ENCODE measurements at regions of chr1 and their contacts with region 1.

Region 1: GRCh38 chr1:8133657-8134430 is 107.7 kb upstream of the ERRFI1 start:
- DNase-seq: no peak
- ATAC-seq: no peak
- H3K4me3 ChIP-seq: no peak overlapping the region
- H3K4me3 Mint-ChIP-seq: no peak overlapping the region
- H3K27ac ChIP-seq: no peak overlapping the region
- H3K27ac Mint-ChIP-seq: no peak overlapping the region
- H3K4me1 ChIP-seq: no peaks in the 10 kb centered on the region
- H3K4me1 Mint-ChIP-seq: no peaks in the 10 kb centered on the region
- H3K27me3 ChIP-seq: peaks cover 0 to 18% of the 10 kb centered on the region in 2 experiments
- H3K27me3 Mint-ChIP-seq: peaks cover 44% of the 10 kb centered on the region
- CTCF ChIP-seq: no peak

Region 2: GRCh38 chr1:7893529-7894180 is 240.2 kb before region 1 on chr1:
- CTCF ChIA-PET with region 1: no interaction called
- POLR2A ChIA-PET with region 1: no interaction called
- intact Hi-C with region 1: no loop called
- DNase-seq: no peak
- ATAC-seq: no peak
- H3K4me3 ChIP-seq: no peak overlapping the region
- H3K4me3 Mint-ChIP-seq: no peak overlapping the region
- H3K27ac ChIP-seq: no peak overlapping the region
- H3K27ac Mint-ChIP-seq: no peak overlapping the region
- H3K4me1 ChIP-seq: no peaks in the 10 kb centered on the region
- H3K4me1 Mint-ChIP-seq: no peaks in the 10 kb centered on the region
- H3K27me3 ChIP-seq: no peaks in the 10 kb centered on the region
- H3K27me3 Mint-ChIP-seq: peaks cover 8% of the 10 kb centered on the region
- CTCF ChIP-seq: no peak

Region 3: DNA sequence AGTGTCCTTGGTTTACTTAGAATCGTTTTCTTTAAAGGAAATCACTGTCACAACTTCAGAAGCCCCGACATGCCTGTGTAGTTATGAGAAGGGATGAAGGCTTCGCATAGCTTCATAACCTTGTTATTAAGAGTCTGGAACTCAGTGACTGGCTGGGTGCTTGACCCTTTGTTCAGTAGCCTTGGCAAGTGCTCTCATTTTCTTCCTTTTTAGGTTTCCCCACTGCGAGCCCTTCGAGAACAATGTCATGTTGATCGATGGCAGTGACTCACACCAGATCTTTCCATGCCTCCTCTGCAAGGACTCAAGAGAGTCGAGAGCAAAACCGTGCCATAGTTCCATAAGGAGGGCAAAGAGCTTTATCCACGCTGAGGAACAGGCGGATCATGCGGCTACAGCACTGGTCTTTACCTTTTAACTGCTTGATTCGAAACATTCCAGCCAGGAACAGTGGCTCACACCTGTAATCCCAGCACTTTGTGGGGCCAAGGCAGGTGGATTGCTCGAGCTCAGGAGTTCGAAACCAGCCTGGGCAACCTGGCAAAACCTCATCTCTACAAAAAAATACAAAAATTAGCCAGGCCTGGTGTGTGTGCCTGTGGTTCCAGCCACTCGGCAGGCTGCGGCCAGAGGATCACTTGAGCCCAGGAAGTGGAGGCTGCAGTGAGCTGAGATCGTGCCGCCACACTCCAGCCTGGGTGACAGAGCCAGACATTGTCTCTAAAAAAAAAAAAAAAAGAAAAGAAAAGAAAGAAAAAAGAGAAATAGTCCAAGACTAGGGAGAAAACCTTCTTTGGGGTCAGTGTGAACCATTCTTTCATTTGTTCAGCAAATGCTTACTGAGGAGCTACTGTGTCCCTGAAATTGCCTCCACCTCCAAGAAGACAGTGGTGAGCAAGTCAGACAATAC is 12.3 kb before region 1 on chr1:
- CTCF ChIA-PET with region 1: no interaction called
- POLR2A ChIA-PET with region 1: interaction called, 6 read pairs
- intact Hi-C with region 1: loop called (anchors 1 to 2 kb)
- DNase-seq: no peak
- ATAC-seq: no peak
- H3K4me3 ChIP-seq: no peak overlapping the region
- H3K4me3 Mint-ChIP-seq: no peak overlapping the region
- H3K27ac ChIP-seq: no peak overlapping the region
- H3K27ac Mint-ChIP-seq: no peak overlapping the region
- H3K4me1 ChIP-seq: peaks cover 10% of the 10 kb centered on the region
- H3K4me1 Mint-ChIP-seq: peaks cover 11% of the 10 kb centered on the region
- H3K27me3 ChIP-seq: peaks cover 3 to 4% of the 10 kb centered on the region in 2 experiments
- H3K27me3 Mint-ChIP-seq: peaks cover 10% of the 10 kb centered on the region
- CTCF ChIP-seq: no peak

Region 4: DNA sequence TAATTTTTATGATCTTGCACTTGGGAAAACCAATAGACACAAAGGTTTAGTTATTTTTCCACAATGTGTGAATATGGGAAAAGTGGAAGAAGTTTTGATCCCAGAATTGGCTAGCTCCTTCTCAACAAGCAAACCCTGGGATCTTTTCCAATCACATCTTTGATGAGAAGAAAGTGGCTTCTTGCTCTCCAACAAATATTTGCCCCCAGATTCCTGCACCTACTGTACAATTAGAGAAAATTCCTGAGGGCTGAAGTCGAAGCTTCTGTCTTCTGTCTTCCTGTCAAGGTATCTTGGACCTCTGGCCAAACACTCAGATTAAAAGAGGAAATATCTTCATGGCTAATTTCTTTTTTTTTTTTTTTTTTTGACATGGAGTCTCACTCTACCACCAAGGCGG is 71.0 kb after region 1 on chr1:
- CTCF ChIA-PET with region 1: no interaction called
- POLR2A ChIA-PET with region 1: no interaction called
- intact Hi-C with region 1: loop called in 1 of 2 experiments (anchors 5 kb)
- DNase-seq: no peak
- ATAC-seq: no peak
- H3K4me3 ChIP-seq: no peak overlapping the region
- H3K4me3 Mint-ChIP-seq: no peak overlapping the region
- H3K27ac ChIP-seq: no peak overlapping the region
- H3K27ac Mint-ChIP-seq: no peak overlapping the region
- H3K4me1 ChIP-seq: no peaks in the 10 kb centered on the region
- H3K4me1 Mint-ChIP-seq: no peaks in the 10 kb centered on the region
- H3K27me3 ChIP-seq: peaks cover 0 to 3% of the 10 kb centered on the region in 2 experiments
- H3K27me3 Mint-ChIP-seq: no peaks in the 10 kb centered on the region
- CTCF ChIP-seq: no peak

Measured in CD4-positive, alpha-beta T cell (primary cell).